ENCODE measurements at regions of chr12 and their contacts with region 1.

Region 1: DNA sequence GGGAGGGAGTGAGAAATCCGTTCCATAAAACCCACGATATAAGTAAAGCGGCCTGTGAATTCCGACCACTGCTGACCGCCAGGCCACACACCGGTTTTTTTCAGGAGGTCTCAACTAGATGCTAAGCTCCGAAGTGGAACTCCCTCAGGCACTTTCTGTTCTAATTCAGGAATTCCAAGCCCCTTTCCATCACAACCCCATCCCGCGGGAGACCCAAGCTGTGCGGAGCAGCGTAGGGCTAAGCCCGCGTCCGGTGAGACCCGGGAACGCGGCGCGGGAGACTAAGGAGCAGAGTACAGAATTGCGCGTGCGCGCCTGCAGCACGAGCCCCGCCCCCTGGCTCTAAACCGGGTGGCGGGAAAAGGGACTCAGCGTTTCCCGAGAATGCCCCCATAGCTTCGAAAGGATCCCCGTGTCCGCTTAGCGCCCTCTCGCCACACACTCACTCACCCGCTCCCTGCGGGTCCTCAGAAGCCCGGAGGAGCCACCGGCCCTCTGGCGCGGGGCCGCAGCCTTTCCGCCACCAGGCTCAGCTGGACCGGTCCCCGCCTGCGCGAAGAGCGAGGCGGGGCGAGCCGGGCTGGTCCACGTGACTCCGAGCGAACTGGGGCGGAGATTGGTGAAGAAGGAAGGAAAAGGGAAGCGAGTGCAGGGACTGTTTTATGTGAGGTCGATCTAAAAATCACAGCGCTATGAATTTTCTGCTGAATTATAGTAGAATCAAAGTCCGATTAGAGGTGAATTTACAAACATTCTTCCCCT is at the start of gene TIMELESS:
- DNase-seq: peak; percentile 98
- H3K4me3 ChIP-seq: peak within 1 kb of the TSS; percentile 74 to 99 (median 98)
- H3K27ac ChIP-seq: peak within 1 kb of the TSS; percentile 64 to 92 (median 88)
- H3K4me1 ChIP-seq: peaks cover 4 to 31% (median 19%) of the 10 kb centered on the region in 6 donors
- H3K27me3 ChIP-seq: no peaks in the 10 kb centered on the region
- CTCF ChIP-seq: peak in 4 of 11 experiments; percentile 31 to 55 (median 40)
- POLR2A ChIP-seq: peak in 2 of 3 donors; percentile 18 to 68
- total RNA-seq, gene TIMELESS: 9.9 to 17.7 (median 13.3) TPM

Region 2: GRCh38 chr12:56359851-56360767 is 88.9 kb before region 1 on chr12 and contains the start of gene STAT2:
- intact Hi-C with region 1: loop called (anchors 10 kb)
- DNase-seq: peak; percentile 100
- H3K4me3 ChIP-seq: peak within 1 kb of the TSS; percentile 60 to 86 (median 72)
- H3K27ac ChIP-seq: peak within 1 kb of the TSS; percentile 85 to 95 (median 92)
- H3K4me1 ChIP-seq: peaks cover 13 to 50% (median 32%) of the 10 kb centered on the region in 6 donors
- H3K27me3 ChIP-seq: no peaks in the 10 kb centered on the region
- CTCF ChIP-seq: peak in 3 of 11 experiments; percentile 21 to 54 (median 38)
- POLR2A ChIP-seq: peak in 2 of 3 donors; percentile 62 to 85
- total RNA-seq, gene STAT2: 219 to 262 (median 233) TPM

Measured in spleen (tissue), 13 donors.